Heart left ventricle (tissue), 16 donors: ENCODE measurements at regions of chr1 and their contacts with region 1.

Region 1: DNA sequence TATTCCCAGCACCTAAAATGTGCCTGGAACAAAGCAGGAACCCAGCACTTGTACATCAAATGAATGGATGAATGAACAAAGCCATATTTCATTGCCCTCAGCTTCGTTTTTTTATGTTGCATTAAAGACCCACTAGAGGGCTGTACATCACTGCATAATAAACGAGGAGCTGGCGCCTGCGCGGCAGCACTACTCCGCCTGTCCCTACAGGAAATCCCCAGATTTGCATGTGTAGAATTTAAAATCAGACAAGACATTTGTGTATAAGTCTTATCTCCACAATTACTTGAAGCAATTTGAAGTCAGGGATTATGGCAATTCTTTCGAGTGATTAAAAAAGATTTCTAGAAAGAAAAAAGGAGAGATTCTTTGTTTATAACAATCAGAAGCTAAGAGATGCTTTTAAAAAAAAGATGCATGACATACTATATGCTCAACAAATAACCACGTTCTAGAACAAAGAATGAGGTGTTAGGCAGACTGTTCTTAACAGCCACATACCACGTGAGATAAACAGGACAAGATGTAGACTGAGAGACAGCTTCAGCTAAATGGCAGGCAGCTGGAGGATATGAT is 5.4 kb upstream of the NEK2 start:
- DNase-seq: peak; percentile 43 to 74 (median 60)
- ATAC-seq: peak; percentile 68 to 92 (median 87)
- H3K4me3 ChIP-seq: no peak overlapping the region
- H3K27ac ChIP-seq: peak overlapping the region in 1 of 12 donors; percentile 54
- H3K4me1 ChIP-seq: peaks cover 0 to 10% (median under 1%) of the 10 kb centered on the region in 12 donors
- H3K27me3 ChIP-seq: peaks cover 0 to under 1% (median 0%) of the 10 kb centered on the region in 9 donors
- CTCF ChIP-seq: peak; percentile 56 to 80 (median 69)
- POLR2A ChIP-seq: no peak

Region 2: GRCh38 chr1:210771131-210771530 is 909.7 kb before region 1 on chr1:
- intact Hi-C with region 1: no loop called
- DNase-seq: no peak
- ATAC-seq: no peak
- H3K4me3 ChIP-seq: no peak overlapping the region
- H3K27ac ChIP-seq: no peak overlapping the region
- H3K4me1 ChIP-seq: no peaks in the 10 kb centered on the region
- H3K27me3 ChIP-seq: peaks cover 0 to 3% (median 0%) of the 10 kb centered on the region in 9 donors
- CTCF ChIP-seq: no peak
- POLR2A ChIP-seq: no peak

Region 3: DNA sequence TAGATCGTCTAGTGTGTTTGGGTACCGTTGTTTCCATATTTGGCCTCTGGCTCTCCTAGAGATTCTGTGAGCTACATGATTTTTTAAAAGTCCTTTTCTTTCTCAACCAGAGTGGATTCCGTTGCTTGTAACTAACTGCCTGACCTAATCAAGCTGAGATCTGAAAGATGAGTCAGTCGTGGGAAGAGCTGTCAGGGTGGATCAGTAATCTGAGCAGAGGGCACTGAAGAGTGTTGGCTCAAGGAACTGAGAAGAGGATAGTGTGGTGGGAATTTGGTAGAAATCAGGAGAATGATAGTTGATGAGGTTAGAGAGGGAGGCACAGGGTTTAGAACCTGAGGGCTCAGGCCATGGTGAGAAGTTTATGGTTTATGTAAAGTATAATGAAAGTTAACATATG is 302.0 kb before region 1 on chr1:
- intact Hi-C with region 1: no loop called
- DNase-seq: no peak
- ATAC-seq: no peak
- H3K4me3 ChIP-seq: no peak overlapping the region
- H3K27ac ChIP-seq: no peak overlapping the region
- H3K4me1 ChIP-seq: peaks cover 0 to 23% (median 5%) of the 10 kb centered on the region in 12 donors
- H3K27me3 ChIP-seq: no peaks in the 10 kb centered on the region
- CTCF ChIP-seq: no peak
- POLR2A ChIP-seq: no peak

Region 4: GRCh38 chr1:211944733-211945500 is 264.1 kb after region 1 on chr1:
- intact Hi-C with region 1: loop called in 6 of 10 experiments (anchors 5 to 10 kb)
- DNase-seq: peak in 2 of 5 donors; percentile 34 to 50
- ATAC-seq: peak in 3 of 4 donors; percentile 76 to 87 (median 83)
- H3K4me3 ChIP-seq: no peak overlapping the region
- H3K27ac ChIP-seq: no peak overlapping the region
- H3K4me1 ChIP-seq: peaks cover 0 to 15% (median 0%) of the 10 kb centered on the region in 12 donors
- H3K27me3 ChIP-seq: no peaks in the 10 kb centered on the region
- CTCF ChIP-seq: peak in 11 of 12 donors; percentile 11 to 63 (median 40)
- POLR2A ChIP-seq: no peak

Region 5: GRCh38 chr1:212021563-212021962 is 340.7 kb after region 1 on chr1:
- intact Hi-C with region 1: loop called in 1 of 10 experiments (anchors 10 kb)
- DNase-seq: no peak
- ATAC-seq: no peak
- H3K4me3 ChIP-seq: no peak overlapping the region
- H3K27ac ChIP-seq: no peak overlapping the region
- H3K4me1 ChIP-seq: no peaks in the 10 kb centered on the region
- H3K27me3 ChIP-seq: no peaks in the 10 kb centered on the region
- CTCF ChIP-seq: no peak
- POLR2A ChIP-seq: no peak

Region 6: GRCh38 chr1:212368073-212368484 is 687.2 kb after region 1 on chr1:
- intact Hi-C with region 1: loop called in 1 of 10 experiments (anchors 10 kb)
- DNase-seq: peak in 3 of 5 donors; percentile 33 to 51 (median 35)
- ATAC-seq: peak; percentile 45 to 88 (median 84)
- H3K4me3 ChIP-seq: no peak overlapping the region
- H3K27ac ChIP-seq: peak overlapping the region in 1 of 12 donors; percentile 2
- H3K4me1 ChIP-seq: peaks cover 0 to 23% (median 1%) of the 10 kb centered on the region in 12 donors
- H3K27me3 ChIP-seq: no peaks in the 10 kb centered on the region
- CTCF ChIP-seq: peak; percentile 76 to 91 (median 83)
- POLR2A ChIP-seq: no peak